ENCODE measurements at regions of chr11 and their contacts with region 1.

Region 1: DNA sequence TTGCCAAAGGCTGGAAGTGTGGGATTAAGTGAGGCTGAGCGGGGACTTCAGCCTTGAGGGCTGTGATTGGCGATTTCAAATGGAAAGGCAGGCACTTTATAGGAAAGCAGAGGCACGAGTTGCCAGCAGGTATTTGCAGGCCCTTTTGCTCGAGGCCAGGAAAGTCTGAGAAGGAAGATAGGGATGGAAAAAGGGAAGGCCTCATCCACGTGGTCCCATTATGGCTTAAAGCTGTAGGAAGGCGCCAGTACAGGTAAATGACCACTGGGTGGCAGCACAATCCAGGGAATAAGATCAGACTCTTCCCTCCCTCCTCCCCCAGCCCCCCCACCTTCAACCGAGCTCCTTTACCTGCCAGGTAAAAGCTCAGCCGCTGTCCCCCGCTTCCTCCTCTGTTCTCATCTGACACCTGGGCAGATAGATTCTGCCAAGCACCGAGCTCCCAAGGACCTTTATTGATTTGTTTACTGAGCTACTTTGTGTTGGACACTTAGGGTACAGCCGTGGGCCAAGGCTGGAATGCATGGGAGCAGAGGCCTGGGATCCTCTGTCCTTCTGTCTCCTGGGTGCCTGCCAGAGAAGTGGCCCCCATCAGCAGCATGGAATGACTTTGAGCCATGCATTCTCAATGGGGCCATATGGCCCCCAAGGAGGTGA is 7.5 kb downstream of the P2RX3 start:
- DNase-seq: peak; percentile 74
- ATAC-seq: peak; percentile 68 to 75

Region 2: DNA sequence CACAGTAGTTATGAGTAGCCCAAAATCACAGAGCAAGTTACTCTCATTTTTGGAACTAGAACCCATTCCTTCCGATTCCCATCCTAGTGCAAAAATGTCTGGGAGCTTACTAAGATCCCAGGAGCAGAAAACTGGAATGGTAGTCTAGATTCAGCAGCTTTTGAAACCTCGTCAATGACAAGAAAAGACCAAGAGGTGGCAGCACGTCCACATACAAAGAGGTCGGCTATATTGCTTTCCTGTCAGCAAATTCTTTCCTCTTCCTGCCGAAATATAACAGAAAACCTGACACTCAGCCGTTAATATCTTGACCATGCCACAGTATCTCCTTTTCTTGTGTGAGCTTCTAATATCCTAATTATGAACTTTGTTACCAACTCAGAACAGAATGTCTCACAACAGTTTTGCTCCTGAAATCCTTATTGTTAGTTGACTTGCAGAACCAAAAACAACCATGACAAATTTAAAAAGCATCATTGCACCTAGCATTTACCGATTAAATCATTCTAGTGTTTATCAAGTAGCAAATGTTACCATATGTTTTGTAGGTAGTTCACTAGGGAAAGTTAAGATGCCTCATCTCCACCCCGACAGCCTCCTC is 504.4 kb before region 1 on chr11:
- intact Hi-C with region 1: loop called in 1 of 2 experiments (anchors 5 kb)
- DNase-seq: peak; percentile 28
- ATAC-seq: peak; percentile 63 to 65

Region 3: DNA sequence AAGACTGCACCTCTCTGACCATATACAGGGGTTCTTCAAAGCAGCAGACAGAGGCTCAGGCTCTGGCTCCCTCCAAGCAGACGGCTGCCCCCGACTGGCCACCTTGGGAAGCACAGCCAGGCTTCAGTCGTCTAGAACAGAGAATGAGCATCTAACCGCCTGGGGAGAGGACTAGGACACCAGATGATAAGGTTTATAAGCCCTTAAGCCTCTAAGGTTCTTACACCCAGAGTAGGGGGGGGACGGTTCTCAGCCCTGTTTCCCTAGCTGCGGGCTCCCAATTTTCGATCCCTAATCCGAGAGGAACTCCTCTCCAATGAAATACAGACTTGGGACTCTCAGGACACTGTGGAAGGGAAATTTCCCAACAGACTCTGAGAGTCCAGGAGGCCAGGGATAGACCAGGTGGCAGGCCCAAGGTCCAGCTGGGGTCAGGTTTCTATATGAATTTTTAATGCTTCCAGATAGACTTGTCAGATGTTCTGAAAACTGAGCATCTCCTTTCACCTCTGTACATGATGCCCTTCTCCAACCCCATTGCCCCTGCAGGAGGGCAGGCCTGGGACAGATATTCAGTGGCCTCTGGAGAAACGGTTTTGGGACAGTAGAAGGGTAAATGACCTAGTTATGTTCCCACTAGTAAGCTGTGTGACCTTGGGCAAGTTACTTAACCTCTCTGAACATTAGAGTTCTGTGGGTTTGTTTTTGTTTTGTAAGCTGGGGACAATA is 134.9 kb after region 1 on chr11:
- intact Hi-C with region 1: loop called in 1 of 2 experiments (anchors 5 kb)
- DNase-seq: peak; percentile 61
- ATAC-seq: peak in 1 of 2 donors; percentile 40

Region 4: GRCh38 chr11:57527056-57527631 is 181.5 kb after region 1 on chr11:
- intact Hi-C with region 1: loop called in 1 of 2 experiments (anchors 10 kb)
- DNase-seq: peak; percentile 75
- ATAC-seq: peak; percentile 10 to 18

Region 5: DNA sequence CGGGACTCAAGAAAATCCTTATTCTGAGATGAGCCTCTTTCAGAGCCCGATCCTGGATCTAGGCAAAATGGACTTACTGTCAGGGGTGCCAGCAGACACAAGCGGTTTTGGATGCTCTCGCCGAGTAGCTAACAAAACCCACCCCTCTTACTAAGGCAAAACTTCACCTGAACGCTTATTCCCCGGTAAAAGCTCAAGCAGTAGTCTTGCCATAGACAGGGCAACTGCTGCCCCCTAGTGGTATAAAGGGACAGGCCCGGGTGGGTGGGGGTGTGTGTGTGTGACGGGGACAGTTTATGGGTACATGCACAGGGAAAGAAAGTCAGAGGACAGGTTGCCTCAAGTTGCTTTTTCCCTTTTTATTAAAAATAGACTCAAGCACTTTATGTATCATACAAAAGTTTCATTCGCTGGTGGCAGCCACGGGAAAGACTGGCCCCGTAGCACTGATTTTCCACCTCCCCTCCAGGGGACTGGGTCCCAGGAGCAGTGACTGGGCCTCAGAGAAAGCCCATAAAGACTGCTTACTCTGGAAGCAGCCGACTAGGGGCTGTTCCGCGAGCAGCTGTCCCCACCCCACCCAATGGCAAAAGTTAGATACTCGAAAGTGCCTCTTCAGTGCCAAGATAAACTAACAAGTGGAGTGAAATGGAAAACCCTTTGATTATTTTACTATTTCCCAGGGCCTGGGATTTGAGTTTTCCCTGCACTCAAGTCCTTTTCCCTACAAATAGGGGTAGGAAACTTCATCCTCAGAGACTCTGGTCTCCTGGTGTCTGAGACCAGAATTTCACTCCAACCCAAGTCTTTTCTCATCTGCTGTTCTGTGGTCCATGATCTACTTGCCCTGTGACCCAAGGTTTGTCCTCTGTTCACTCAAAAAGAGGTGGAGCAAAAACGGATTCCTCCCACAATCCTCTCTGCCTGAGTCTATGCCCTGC is 299.3 kb after region 1 on chr11:
- intact Hi-C with region 1: loop called in 1 of 2 experiments (anchors 2 kb)
- DNase-seq: peak; percentile 75
- ATAC-seq: peak; percentile 72 to 76